ENCODE measurements at regions of chr13 and their contacts with region 1.

Region 1: GRCh38 chr13:98565726-98566565 is 11.0 kb downstream of the STK24 start:
- DNase-seq: peak; percentile 38
- H3K4me3 Mint-ChIP-seq: peak overlapping the region; percentile 53
- H3K27ac Mint-ChIP-seq: peak overlapping the region; percentile 88
- H3K4me1 Mint-ChIP-seq: peaks cover 92% of the 10 kb centered on the region
- H3K27me3 Mint-ChIP-seq: no peaks in the 10 kb centered on the region

Region 2: GRCh38 chr13:98509271-98510155 is 56.4 kb before region 1 on chr13:
- CTCF ChIA-PET with region 1: interaction called, 3 read pairs
- intact Hi-C with region 1: loop called (anchors 1 kb)
- DNase-seq: peak; percentile 69
- H3K4me3 Mint-ChIP-seq: peak overlapping the region; percentile 29
- H3K27ac Mint-ChIP-seq: peak overlapping the region; percentile 77
- H3K4me1 Mint-ChIP-seq: peaks cover 94% of the 10 kb centered on the region
- H3K27me3 Mint-ChIP-seq: no peaks in the 10 kb centered on the region

Region 3: DNA sequence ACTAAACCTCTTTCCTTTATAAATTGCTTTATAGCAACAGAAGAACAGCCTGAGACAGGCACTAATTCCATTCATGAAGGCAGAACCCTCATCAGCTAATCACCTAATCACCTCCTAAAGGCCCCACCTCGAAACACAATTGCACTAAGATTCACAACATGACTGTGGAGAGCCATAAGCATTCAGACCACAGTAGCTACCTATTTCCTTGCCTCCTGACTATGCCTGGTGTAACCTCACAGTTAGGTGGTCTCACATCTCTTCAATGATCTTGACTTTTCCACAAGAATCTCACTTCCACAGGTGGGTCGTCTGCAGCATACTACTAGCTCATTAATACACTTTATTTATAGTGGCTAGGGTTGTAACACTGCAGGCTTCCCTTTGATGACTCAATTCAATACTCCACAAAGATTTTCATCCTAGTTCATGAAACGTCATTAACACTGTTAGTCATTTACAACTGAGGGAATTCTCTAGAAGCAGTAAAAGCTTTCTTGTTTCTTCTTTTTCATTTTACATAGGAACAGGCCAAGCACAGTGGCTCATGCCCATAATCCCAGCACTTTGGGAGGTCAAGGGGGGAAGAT is 16.1 kb before region 1 on chr13:
- CTCF ChIA-PET with region 1: interaction called, 6 read pairs
- intact Hi-C with region 1: loop called (anchors 2 kb)
- DNase-seq: no peak
- H3K4me3 Mint-ChIP-seq: no peak overlapping the region
- H3K27ac Mint-ChIP-seq: peak overlapping the region; percentile 59
- H3K4me1 Mint-ChIP-seq: peaks cover 80% of the 10 kb centered on the region
- H3K27me3 Mint-ChIP-seq: no peaks in the 10 kb centered on the region

Measured in activated naive CD4-positive, alpha-beta T cell treated with anti-CD3 and anti-CD28 coated beads for 36 hours (primary cell).